Right lobe of liver (tissue), 6 donors: ENCODE measurements at regions of chr2 and their contacts with region 1.

Region 1: GRCh38 chr2:55010149-55010591 is 40.1 kb downstream of the RTN4 start:
- DNase-seq: peak; percentile 37 to 85 (median 78)
- ATAC-seq: peak; percentile 68 to 88 (median 80)
- H3K4me3 ChIP-seq: peak overlapping the region; percentile 44 to 57 (median 47)
- H3K27ac ChIP-seq: peak overlapping the region; percentile 69 to 88 (median 74)
- H3K4me1 ChIP-seq: peaks cover 0 to 63% (median 11%) of the 10 kb centered on the region in 4 donors
- H3K27me3 ChIP-seq: no peaks in the 10 kb centered on the region
- CTCF ChIP-seq: no peak
- POLR2A ChIP-seq: peak; percentile 67

Region 2: GRCh38 chr2:54899576-54900200 is 110.5 kb before region 1 on chr2:
- intact Hi-C with region 1: loop called in 1 of 2 experiments (anchors 10 kb)
- DNase-seq: no peak
- ATAC-seq: peak; percentile 60 to 74 (median 64)
- H3K4me3 ChIP-seq: no peak overlapping the region
- H3K27ac ChIP-seq: no peak overlapping the region
- H3K4me1 ChIP-seq: peaks cover 0 to 26% (median 12%) of the 10 kb centered on the region in 4 donors
- H3K27me3 ChIP-seq: no peaks in the 10 kb centered on the region
- CTCF ChIP-seq: peak; percentile 63 to 78 (median 72)
- POLR2A ChIP-seq: no peak